Right ventricle myocardium inferior (tissue), 1 donor: ENCODE measurements at regions of chr2 and their contacts with region 1.

Region 1: GRCh38 chr2:231557571-231558237 is 27.5 kb upstream of the NMUR1 start:
- DNase-seq: peak; percentile 83
- ATAC-seq: peak; percentile 94

Region 2: GRCh38 chr2:231482806-231483391 is 74.8 kb before region 1 on chr2:
- intact Hi-C with region 1: loop called (anchors 1 kb)
- DNase-seq: peak; percentile 91
- ATAC-seq: peak; percentile 92

Region 3: DNA sequence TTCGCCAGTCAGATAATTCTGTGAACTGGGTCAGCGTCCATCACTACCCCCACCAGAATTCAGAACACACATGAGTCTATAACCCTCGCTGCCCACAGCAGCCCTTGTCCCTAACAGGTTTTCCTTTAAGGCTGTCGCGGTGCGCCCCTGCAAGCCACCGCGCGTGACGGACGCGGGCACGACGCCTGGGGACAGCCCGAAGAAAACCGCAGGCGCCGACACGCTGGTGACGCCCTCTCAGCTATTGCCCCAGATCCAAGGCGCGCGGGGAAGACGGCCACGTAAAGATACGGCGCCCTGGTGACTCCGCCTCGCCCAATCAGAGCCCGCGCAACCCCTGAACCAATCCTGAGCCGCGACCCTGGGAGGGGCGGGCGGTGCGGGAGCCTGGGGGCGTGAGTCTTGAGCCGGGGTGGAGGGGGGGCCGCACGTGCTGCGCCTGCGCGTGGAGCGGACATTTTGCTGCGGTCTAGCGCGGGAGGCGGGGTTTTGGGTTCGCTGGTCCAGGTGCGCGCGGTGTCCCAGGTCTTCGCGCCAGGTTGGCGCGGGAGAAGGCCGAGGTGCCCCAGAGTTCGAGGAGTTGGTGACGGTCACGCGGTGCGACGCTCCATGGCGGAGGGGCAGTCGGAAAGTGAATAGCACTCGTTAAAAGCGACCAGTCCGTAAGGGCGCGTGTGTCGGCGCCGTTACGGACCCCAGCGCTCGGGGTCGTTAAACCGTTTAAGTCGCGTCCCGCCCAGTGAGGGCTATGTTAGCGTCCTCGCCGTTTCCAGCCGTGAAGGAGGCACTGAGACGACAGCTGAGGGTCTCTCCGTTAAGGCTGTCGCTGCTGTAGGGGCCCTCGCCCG is 43.4 kb before region 1 on chr2:
- intact Hi-C with region 1: loop called (anchors 2 kb)
- DNase-seq: peak; percentile 99
- ATAC-seq: peak; percentile 100

Region 4: GRCh38 chr2:231530091-231531011 is 27.4 kb before region 1 on chr2 and contains the start of gene NMUR1:
- intact Hi-C with region 1: loop called (anchors 1 kb)
- DNase-seq: peak; percentile 90
- ATAC-seq: peak; percentile 81
- total RNA-seq, gene NMUR1: 0.38 TPM